Activated CD4-positive, alpha-beta T cell treated with anti-CD3 and anti-CD28 coated beads, Interleukin-2, amount 10 ng/mL, durations not matched to agents 24 days and 14 days (primary cell): ENCODE measurements at regions of chr6 and their contacts with region 1.

Region 1: GRCh38 chr6:4775584-4776494 is at the start of gene CDYL:
- DNase-seq: peak; percentile 97
- H3K4me3 Mint-ChIP-seq: peak within 1 kb of the TSS; percentile 85
- H3K27ac Mint-ChIP-seq: peak within 1 kb of the TSS; percentile 87
- H3K4me1 Mint-ChIP-seq: peaks cover 37% of the 10 kb centered on the region
- H3K27me3 Mint-ChIP-seq: peaks cover 35% of the 10 kb centered on the region
- total RNA-seq, gene CDYL: 23.4 and 24.4 TPM in 2 replicates

Region 2: DNA sequence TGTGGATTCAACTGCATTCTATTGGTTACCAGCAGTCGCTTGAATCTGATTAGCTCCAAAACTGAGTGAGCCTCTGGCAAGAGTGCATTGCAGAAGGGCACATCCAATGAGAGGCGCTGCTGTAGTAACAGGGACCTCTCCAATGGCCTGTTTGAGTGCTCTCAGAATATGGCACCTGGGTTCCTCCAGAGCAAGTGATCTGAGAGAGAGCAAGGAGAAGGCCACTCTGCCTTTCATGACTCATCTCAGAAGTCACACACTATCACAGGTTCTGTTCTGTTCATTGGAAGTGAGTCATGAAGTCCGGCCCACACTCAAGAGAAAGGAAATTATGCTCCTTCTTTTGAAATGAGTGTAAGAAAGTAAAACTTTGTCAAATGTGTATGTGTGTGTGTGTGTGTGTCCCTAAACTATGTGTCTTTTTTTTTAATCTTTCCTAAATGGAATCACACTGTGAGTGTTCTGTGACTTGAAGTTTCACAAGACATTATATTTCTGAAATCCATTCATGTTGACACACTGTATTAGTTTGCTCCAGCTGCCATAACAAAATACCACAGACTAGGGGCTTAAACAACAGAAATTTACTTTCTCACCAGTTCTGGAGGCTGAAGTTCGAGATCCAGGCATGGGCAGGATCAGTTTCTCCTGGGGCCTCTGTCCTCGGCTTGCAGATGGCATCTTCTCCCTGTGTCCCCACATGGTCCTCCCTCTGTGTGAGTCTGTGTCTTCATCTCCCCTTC is 138.0 kb before region 1 on chr6:
- intact Hi-C with region 1: loop called (anchors 5 kb)
- DNase-seq: peak; percentile 65
- H3K4me3 Mint-ChIP-seq: no peak overlapping the region
- H3K27ac Mint-ChIP-seq: peak overlapping the region; percentile 60
- H3K4me1 Mint-ChIP-seq: peaks cover 9% of the 10 kb centered on the region
- H3K27me3 Mint-ChIP-seq: peaks cover 6% of the 10 kb centered on the region

Region 3: DNA sequence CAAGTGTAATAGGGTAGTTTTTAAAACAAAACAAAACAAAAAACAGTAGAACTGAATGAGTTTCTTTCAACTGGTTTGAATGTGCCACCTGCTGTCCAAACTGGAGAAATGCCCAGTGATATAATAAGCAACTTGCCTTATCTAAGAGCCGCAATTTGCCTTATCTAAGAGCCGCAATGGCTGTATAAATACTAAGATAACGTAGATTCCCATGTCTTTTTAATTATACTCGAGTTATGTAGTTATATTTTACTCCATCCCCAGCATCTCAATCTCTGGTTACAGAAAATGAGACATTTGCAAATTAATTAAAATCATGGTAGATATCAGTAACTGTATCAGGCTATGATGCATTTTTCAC is 160.8 kb after region 1 on chr6:
- intact Hi-C with region 1: loop called (anchors 5 kb)
- DNase-seq: no peak
- H3K4me3 Mint-ChIP-seq: no peak overlapping the region
- H3K27ac Mint-ChIP-seq: no peak overlapping the region
- H3K4me1 Mint-ChIP-seq: peaks cover 32% of the 10 kb centered on the region
- H3K27me3 Mint-ChIP-seq: no peaks in the 10 kb centered on the region